Ovary (tissue), 10 donors: ENCODE measurements at regions of chr1 and their contacts with region 1.

Region 1: DNA sequence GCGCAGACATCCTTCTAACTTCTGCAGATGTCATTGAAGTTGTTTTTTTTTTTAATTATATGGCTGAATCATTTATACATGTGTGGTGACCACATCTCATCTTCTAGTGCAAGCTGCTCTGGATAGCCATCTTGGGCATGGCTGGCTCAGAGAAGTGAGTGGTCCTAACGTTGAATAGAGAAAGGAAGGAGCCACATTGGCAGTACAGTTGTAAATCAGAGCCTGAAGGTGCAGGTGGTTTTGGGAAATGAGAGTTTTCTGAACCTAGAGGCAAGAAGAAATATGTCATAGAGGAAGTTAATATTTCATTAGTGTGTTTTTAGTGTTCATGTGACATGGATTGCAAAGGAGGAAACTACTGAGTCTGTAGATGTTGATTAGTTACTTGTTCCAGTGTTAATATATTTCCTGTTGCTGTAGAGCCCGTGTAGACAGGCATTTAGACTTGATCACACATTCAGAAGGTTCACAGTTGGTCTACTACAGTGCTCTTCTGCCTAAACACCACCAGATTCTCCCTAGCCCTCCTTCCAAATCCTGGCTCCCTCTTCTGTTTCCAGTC is 163.7 kb downstream of the ROR1 start:
- DNase-seq: no peak
- H3K4me3 ChIP-seq: no peak overlapping the region
- H3K27ac ChIP-seq: no peak overlapping the region
- H3K4me1 ChIP-seq: no peaks in the 10 kb centered on the region
- H3K27me3 ChIP-seq: no peaks in the 10 kb centered on the region
- CTCF ChIP-seq: no peak
- EP300 ChIP-seq: no peak
- POLR2A ChIP-seq: no peak

Region 2: DNA sequence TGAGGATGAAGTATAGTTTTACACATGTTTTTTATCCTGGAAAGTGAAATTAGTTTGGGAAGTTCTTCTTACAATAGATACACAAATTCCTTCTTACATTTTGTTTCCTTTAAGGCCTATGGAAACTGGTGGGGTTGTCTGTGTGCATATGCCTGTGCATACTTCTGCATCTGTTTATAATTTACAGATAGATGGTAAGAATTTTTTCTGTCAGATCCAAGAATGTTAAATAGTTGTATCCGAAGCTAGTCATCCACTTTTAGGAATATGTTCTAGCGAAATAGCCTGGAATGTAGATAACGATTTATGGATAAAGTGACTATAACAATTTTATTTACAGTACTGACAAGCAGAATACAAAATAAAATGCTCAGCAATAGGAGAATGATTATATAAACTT is 30.4 kb after region 1 on chr1:
- intact Hi-C with region 1: loop called in 1 of 4 experiments (anchors 2 kb)
- DNase-seq: no peak
- H3K4me3 ChIP-seq: no peak overlapping the region
- H3K27ac ChIP-seq: no peak overlapping the region
- H3K4me1 ChIP-seq: peaks cover 2% of the 10 kb centered on the region
- H3K27me3 ChIP-seq: no peaks in the 10 kb centered on the region
- CTCF ChIP-seq: no peak
- EP300 ChIP-seq: no peak
- POLR2A ChIP-seq: no peak